ENCODE measurements at regions of chr5 and their contacts with region 1.

Region 1: DNA sequence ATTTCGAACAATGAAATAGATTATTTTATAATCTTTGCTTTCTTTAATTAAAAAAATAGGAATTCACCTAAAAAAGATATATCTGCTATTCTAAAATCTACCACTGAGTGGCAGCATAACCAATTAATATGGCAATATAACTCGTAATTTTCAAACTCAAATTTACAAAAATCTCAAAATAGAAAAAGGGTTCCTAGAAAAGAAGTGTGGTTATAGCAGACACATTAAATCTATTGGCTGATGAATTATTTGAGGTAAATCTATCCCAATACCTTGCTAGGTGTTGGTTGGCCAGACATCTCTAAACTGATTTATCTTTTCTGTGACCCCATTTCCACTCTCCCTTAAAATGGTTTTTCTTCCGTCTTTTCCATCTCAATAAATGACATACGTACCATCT is 30.2 kb upstream of the NRG2 start:
- DNase-seq: peak; percentile 61
- ATAC-seq: no peak
- H3K4me3 ChIP-seq: no peak overlapping the region
- H3K4me3 Mint-ChIP-seq: no peak overlapping the region
- H3K27ac ChIP-seq: no peak overlapping the region
- H3K27ac Mint-ChIP-seq: no peak overlapping the region
- H3K4me1 ChIP-seq: no peaks in the 10 kb centered on the region
- H3K4me1 Mint-ChIP-seq: no peaks in the 10 kb centered on the region
- H3K27me3 ChIP-seq: peaks cover 0 to 17% (median 5%) of the 10 kb centered on the region in 4 experiments
- H3K27me3 Mint-ChIP-seq: peaks cover 26% of the 10 kb centered on the region
- CTCF ChIP-seq: peak; percentile 89

Region 2: DNA sequence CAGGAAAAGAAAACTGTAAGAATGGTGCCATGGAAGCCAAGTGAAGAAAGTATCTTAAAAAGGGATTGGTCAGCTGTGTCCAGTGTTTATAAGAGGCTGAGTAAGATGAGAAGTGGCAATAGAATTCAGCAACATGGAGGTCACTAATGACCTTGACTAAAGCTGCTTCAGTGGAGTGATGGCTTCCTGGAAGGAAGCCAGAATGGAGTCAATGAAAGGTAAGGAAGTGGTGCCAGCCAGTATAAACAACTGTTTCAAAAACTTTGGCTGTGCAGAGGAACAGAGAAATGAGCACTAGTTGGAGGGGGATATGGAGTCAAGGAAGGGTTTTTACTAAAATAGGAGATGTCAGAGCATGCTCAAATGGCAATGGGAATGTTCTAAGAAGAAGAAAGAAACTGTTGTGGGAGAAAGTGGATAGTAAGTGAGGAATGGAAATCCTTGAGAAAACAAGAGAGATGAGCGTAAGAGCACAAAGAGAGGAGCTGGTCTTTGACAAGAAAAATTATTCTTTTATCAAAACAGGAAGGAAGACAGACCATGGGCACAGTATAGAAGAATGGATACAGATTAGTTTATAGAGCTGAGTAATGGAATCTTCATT is 19.1 kb before region 1 on chr5:
- CTCF ChIA-PET with region 1: interaction called, 19 read pairs
- POLR2A ChIA-PET with region 1: no interaction called
- intact Hi-C with region 1: no loop called
- DNase-seq: no peak
- ATAC-seq: no peak
- H3K4me3 ChIP-seq: no peak overlapping the region
- H3K4me3 Mint-ChIP-seq: no peak overlapping the region
- H3K27ac ChIP-seq: no peak overlapping the region
- H3K27ac Mint-ChIP-seq: no peak overlapping the region
- H3K4me1 ChIP-seq: no peaks in the 10 kb centered on the region
- H3K4me1 Mint-ChIP-seq: no peaks in the 10 kb centered on the region
- H3K27me3 ChIP-seq: peaks cover 0 to 23% (median 13%) of the 10 kb centered on the region in 4 experiments
- H3K27me3 Mint-ChIP-seq: peaks cover 12% of the 10 kb centered on the region
- CTCF ChIP-seq: no peak

Region 3: GRCh38 chr5:140113699-140114263 is 40.5 kb after region 1 on chr5 and contains the start of gene PURA:
- CTCF ChIA-PET with region 1: interaction called, 7 read pairs
- POLR2A ChIA-PET with region 1: no interaction called
- intact Hi-C with region 1: loop called (anchors 2 kb)
- DNase-seq: peak; percentile 96
- ATAC-seq: peak; percentile 91
- H3K4me3 ChIP-seq: peak within 1 kb of the TSS; percentile 49 to 82 (median 78)
- H3K4me3 Mint-ChIP-seq: peak within 1 kb of the TSS; percentile 98
- H3K27ac ChIP-seq: peak within 1 kb of the TSS; percentile 72 to 87
- H3K27ac Mint-ChIP-seq: peak within 1 kb of the TSS; percentile 99
- H3K4me1 ChIP-seq: peaks cover 40 to 58% of the 10 kb centered on the region in 2 donors
- H3K4me1 Mint-ChIP-seq: peaks cover 71% of the 10 kb centered on the region
- H3K27me3 ChIP-seq: peaks cover 5 to 19% (median 11%) of the 10 kb centered on the region in 4 experiments
- H3K27me3 Mint-ChIP-seq: peaks cover 11% of the 10 kb centered on the region
- CTCF ChIP-seq: peak; percentile 17
- total RNA-seq, gene PURA: 23.5 and 26.0 TPM in 2 replicates

Region 4: DNA sequence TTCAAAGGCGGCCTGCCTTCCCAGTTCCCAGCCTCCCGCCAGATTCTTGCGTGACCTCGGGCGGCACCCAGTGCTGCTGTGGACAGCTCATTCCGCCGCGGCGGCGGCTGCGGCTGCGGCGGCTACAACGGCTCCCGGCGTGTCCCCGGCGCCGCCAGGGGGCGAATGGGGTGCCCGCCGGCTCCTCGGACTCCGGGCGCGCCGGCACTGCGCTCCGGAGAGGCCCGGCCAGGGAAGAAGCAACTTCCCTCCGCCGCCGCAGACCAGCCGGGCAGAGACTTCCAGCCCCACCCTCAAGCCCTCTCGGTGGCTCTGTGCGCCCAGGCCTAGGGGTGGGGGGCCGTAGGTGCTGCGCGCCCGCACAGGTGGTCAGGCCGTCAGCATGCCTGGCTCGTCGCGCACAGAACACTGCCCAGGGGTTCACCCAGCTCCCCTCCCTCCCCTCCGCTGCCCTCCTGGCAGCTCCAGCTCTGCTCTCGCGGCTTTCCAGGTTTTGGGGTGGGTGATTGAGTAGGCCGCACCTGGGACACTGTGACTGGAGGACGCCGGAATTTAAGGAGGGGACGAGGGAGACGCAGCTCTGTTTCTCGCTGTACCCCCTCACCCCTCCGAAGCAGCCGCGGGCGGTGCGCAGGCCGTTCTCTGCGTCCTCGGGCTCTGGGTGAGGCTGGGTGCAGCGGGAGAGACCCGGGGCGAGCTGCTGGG is 72.7 kb after region 1 on chr5:
- CTCF ChIA-PET with region 1: interaction called, 513 read pairs
- POLR2A ChIA-PET with region 1: no interaction called
- intact Hi-C with region 1: loop called (anchors 1 kb)
- DNase-seq: peak; percentile 77
- ATAC-seq: peak; percentile 73
- H3K4me3 ChIP-seq: peak overlapping the region in 4 of 5 experiments; percentile 22 to 43 (median 40)
- H3K4me3 Mint-ChIP-seq: peak overlapping the region; percentile 66
- H3K27ac ChIP-seq: no peak overlapping the region
- H3K27ac Mint-ChIP-seq: no peak overlapping the region
- H3K4me1 ChIP-seq: peaks cover 17 to 23% of the 10 kb centered on the region in 2 donors
- H3K4me1 Mint-ChIP-seq: peaks cover 24% of the 10 kb centered on the region
- H3K27me3 ChIP-seq: peaks cover 0 to 27% (median 11%) of the 10 kb centered on the region in 4 experiments
- H3K27me3 Mint-ChIP-seq: peaks cover 20% of the 10 kb centered on the region
- CTCF ChIP-seq: peak; percentile 79

Region 5: GRCh38 chr5:140351609-140352334 is 278.5 kb after region 1 on chr5:
- CTCF ChIA-PET with region 1: no interaction called
- POLR2A ChIA-PET with region 1: no interaction called
- intact Hi-C with region 1: loop called (anchors 5 kb)
- DNase-seq: peak; percentile 82
- ATAC-seq: peak; percentile 76
- H3K4me3 ChIP-seq: no peak overlapping the region
- H3K4me3 Mint-ChIP-seq: no peak overlapping the region
- H3K27ac ChIP-seq: no peak overlapping the region
- H3K27ac Mint-ChIP-seq: no peak overlapping the region
- H3K4me1 ChIP-seq: peaks cover 26 to 30% of the 10 kb centered on the region in 2 donors
- H3K4me1 Mint-ChIP-seq: peaks cover 25% of the 10 kb centered on the region
- H3K27me3 ChIP-seq: peaks cover 0 to 12% (median 0%) of the 10 kb centered on the region in 4 experiments
- H3K27me3 Mint-ChIP-seq: peaks cover 9% of the 10 kb centered on the region
- CTCF ChIP-seq: peak; percentile 93

Measured in B cell (primary cell).